CD4-positive, alpha-beta memory T cell (primary cell): ENCODE measurements at regions of chr2 and their contacts with region 1.

Region 1: DNA sequence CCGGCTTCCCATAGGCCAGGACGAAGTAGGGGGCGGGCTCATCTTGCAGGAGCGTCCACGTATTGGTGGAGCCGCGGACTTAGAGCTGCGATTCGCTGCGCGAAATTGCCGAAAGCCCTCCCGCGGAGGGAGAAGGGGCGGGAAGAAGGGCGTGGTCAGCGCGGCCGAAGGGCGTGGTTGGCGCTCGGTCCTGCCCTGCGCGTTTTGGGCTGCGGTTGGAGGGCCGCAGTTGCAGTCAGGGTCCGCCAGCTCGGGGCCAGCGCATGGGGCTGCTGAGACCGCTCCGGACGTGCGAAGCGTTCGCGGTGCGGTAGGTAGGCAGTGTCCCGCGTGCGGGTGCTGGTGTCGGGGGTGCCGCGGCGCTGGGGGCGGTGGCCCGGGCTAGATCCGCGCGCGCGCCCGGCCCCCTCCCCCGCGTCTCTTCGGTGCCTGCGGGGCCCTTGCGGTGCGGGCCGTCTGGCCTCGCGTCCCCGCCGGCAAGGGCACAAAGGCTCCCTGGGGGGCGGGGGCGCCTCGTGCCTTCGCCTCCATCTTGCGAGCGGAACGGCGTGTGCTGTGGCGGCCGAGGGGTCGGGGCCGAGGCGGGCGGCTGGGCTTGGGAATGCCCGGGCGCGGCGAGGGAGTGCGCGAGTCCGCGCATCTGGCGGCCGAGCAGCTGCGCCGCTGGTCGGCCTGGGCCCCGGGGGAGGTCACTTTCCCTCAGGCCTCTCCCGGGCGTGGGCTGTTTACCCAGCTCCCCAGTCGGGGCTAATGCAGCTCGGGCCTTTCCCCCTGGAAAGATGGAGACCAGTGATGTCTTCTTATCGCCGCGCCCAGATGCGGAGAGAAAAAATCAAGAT is at the start of gene CEP68:
- DNase-seq: peak; percentile 94 to 97 (median 95)
- H3K4me3 ChIP-seq: peak within 1 kb of the TSS; percentile 83 to 92
- H3K4me3 Mint-ChIP-seq: peak within 1 kb of the TSS; percentile 90 to 98 (median 97)
- H3K27ac ChIP-seq: peak within 1 kb of the TSS; percentile 67
- H3K27ac Mint-ChIP-seq: peak within 1 kb of the TSS; percentile 94 to 98 (median 97)
- H3K4me1 ChIP-seq: peaks cover 73% of the 10 kb centered on the region
- H3K4me1 Mint-ChIP-seq: peaks cover 35 to 77% (median 46%) of the 10 kb centered on the region in 4 donors
- H3K27me3 ChIP-seq: no peaks in the 10 kb centered on the region
- H3K27me3 Mint-ChIP-seq: no peaks in the 10 kb centered on the region
- total RNA-seq, gene CEP68: 57.7 to 59.9 TPM

Region 2: GRCh38 chr2:63841254-63842022 is 1215.0 kb before region 1 on chr2 and contains the start of gene UGP2:
- CTCF ChIA-PET with region 1: no interaction called
- POLR2A ChIA-PET with region 1: interaction called, 3 read pairs
- intact Hi-C with region 1: loop called (anchors 2 kb)
- DNase-seq: peak; percentile 82 to 94 (median 83)
- H3K4me3 ChIP-seq: peak within 1 kb of the TSS; percentile 63 to 85
- H3K4me3 Mint-ChIP-seq: peak within 1 kb of the TSS; percentile 96 to 100 (median 98)
- H3K27ac ChIP-seq: peak within 1 kb of the TSS; percentile 71
- H3K27ac Mint-ChIP-seq: peak within 1 kb of the TSS; percentile 95 to 100 (median 97)
- H3K4me1 ChIP-seq: peaks cover 44% of the 10 kb centered on the region
- H3K4me1 Mint-ChIP-seq: peaks cover 38 to 63% (median 51%) of the 10 kb centered on the region in 4 donors
- H3K27me3 ChIP-seq: no peaks in the 10 kb centered on the region
- H3K27me3 Mint-ChIP-seq: no peaks in the 10 kb centered on the region
- total RNA-seq, gene UGP2: 77.6 to 92.7 TPM

Region 3: GRCh38 chr2:64767670-64768468 is 288.6 kb before region 1 on chr2:
- CTCF ChIA-PET with region 1: no interaction called
- POLR2A ChIA-PET with region 1: no interaction called
- intact Hi-C with region 1: loop called (anchors 5 kb)
- DNase-seq: peak; percentile 66 to 86 (median 69)
- H3K4me3 ChIP-seq: peak overlapping the region; percentile 47 to 72
- H3K4me3 Mint-ChIP-seq: peak overlapping the region; percentile 86 to 99 (median 94)
- H3K27ac ChIP-seq: peak overlapping the region; percentile 90
- H3K27ac Mint-ChIP-seq: peak overlapping the region; percentile 81 to 97 (median 96)
- H3K4me1 ChIP-seq: peaks cover 14% of the 10 kb centered on the region
- H3K4me1 Mint-ChIP-seq: peaks cover 12 to 23% (median 13%) of the 10 kb centered on the region in 4 donors
- H3K27me3 ChIP-seq: no peaks in the 10 kb centered on the region
- H3K27me3 Mint-ChIP-seq: no peaks in the 10 kb centered on the region

Region 4: DNA sequence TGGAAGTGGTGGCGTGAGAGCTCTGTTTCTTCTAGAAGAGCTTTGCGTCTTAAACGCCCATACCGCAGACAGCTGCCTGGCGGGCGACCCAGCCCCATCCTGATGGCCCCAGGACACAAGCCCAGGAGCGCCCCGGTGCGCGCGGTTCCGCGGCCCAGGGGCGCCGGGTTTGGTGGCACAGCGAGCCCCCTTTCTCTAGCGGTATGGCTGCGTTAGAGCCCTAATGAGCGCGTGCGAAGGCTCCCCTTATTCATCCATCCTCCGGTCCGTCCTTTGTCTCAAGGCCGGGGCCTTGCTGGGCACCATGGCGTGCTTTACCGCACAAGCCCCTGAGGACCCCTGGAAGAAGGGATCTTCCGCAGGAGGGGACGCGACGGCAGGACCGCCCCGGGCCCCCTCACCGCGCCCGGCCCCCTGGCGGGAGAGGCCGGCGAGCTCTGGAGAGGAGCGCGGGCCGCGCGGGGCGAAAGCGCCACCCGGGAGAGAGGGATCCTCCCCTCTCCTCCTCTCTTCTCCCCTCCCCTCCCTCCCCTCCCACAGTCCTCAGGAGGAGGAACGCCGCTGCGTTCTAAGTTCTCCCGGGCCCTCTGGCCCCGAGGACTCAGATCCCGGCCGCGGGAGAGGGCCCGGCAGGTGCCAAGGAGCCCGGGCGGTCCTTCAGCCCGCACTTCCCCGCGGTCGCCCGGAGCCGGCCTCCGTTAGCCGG is 67.9 kb before region 1 on chr2:
- CTCF ChIA-PET with region 1: interaction called, 5 read pairs
- POLR2A ChIA-PET with region 1: interaction called, 18 read pairs
- intact Hi-C with region 1: loop called (anchors 1 kb)
- DNase-seq: peak in 4 of 5 donors; percentile 53 to 76 (median 60)
- H3K4me3 ChIP-seq: peak overlapping the region; percentile 52 to 56
- H3K4me3 Mint-ChIP-seq: peak overlapping the region; percentile 84 to 91 (median 89)
- H3K27ac ChIP-seq: peak overlapping the region; percentile 48
- H3K27ac Mint-ChIP-seq: peak overlapping the region; percentile 38 to 93 (median 71)
- H3K4me1 ChIP-seq: peaks cover 32% of the 10 kb centered on the region
- H3K4me1 Mint-ChIP-seq: peaks cover 16 to 44% (median 33%) of the 10 kb centered on the region in 4 donors
- H3K27me3 ChIP-seq: no peaks in the 10 kb centered on the region
- H3K27me3 Mint-ChIP-seq: no peaks in the 10 kb centered on the region

Region 5: GRCh38 chr2:65040400-65041261 is 15.8 kb before region 1 on chr2:
- CTCF ChIA-PET with region 1: interaction called, 21 read pairs
- POLR2A ChIA-PET with region 1: interaction called, 4 read pairs
- intact Hi-C with region 1: loop called (anchors 2 kb)
- DNase-seq: peak; percentile 67 to 74 (median 69)
- H3K4me3 ChIP-seq: no peak overlapping the region
- H3K4me3 Mint-ChIP-seq: peak overlapping the region in 2 of 8 donors; percentile 38 to 76
- H3K27ac ChIP-seq: no peak overlapping the region
- H3K27ac Mint-ChIP-seq: no peak overlapping the region
- H3K4me1 ChIP-seq: peaks cover 8% of the 10 kb centered on the region
- H3K4me1 Mint-ChIP-seq: peaks cover 4 to 11% (median 8%) of the 10 kb centered on the region in 4 donors
- H3K27me3 ChIP-seq: no peaks in the 10 kb centered on the region
- H3K27me3 Mint-ChIP-seq: no peaks in the 10 kb centered on the region

Region 6: DNA sequence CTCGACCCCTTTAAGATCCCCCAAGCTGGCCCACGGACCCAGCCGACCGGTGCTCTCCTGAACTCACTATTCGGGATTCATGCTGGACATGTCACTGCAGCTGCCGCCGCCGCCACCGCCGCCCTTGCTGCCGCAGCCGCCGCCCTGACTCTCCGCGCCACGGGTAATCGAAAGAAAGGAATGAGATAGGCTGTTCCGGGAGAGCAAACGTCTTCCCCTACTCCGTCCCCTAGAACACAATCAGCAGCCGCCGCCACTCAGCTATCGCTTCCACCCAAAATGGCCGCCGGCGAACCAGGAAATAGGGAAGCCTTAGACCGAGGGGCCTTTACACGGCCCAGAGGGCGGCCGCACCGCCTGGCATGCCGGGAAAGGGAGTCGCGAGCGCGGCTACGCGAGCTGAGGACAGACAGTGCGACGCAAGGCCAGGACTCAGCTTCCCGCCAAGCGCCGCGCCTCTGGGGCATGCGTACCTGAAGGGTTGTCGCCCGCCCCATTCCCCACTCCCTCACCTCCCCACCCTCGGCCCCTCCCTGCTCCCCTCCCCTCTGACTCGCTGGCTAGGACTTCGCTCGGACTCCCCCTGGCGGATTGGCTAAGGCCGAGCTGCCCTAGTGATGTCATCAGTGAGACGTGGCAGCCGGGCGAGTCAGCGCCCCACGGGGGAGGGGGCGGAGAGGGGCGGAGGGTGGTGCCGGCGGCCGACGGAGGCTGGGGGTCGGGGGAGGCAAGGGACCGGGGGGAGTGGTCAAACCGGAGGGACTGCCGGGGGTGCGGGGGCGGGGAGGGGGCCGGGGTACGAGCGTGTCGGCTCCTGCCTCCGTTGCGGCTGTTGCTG is 73.6 kb after region 1 on chr2 and contains the start of gene RAB1A:
- CTCF ChIA-PET with region 1: interaction called, 11 read pairs
- POLR2A ChIA-PET with region 1: interaction called, 85 read pairs
- intact Hi-C with region 1: loop called (anchors 1 kb)
- DNase-seq: peak; percentile 95 to 100 (median 99)
- H3K4me3 ChIP-seq: peak within 1 kb of the TSS; percentile 74 to 94
- H3K4me3 Mint-ChIP-seq: peak within 1 kb of the TSS; percentile 97 to 100 (median 99)
- H3K27ac ChIP-seq: peak within 1 kb of the TSS; percentile 97
- H3K27ac Mint-ChIP-seq: peak within 1 kb of the TSS; percentile 94 to 100 (median 99)
- H3K4me1 ChIP-seq: peaks cover 45% of the 10 kb centered on the region
- H3K4me1 Mint-ChIP-seq: peaks cover 20 to 51% (median 28%) of the 10 kb centered on the region in 4 donors
- H3K27me3 ChIP-seq: no peaks in the 10 kb centered on the region
- H3K27me3 Mint-ChIP-seq: no peaks in the 10 kb centered on the region
- total RNA-seq, gene RAB1A: 53.3 to 58.4 TPM